ENCODE measurements at regions of chr1 and their contacts with region 1.

Region 1: DNA sequence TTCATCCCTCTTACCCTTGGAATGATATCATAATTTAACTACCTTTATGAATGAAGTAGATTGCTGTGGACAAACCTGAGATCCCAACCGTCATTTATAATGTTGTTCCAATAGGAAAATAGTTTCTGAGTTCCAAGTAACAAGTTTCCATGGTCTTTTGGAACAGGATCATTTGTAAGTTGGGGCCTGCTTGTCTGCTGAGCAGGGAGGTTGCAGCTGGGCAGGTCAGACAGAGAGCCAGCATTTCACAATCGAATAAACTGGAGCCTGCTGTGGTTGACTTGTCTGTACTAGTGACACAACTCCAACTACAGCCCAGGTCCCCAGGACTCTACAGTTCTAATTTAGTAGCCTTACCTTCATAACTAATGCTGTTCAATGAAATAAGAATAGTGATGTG is 18.6 kb upstream of the RALGPS2 start:
- DNase-seq: no peak
- ATAC-seq: no peak
- H3K4me3 ChIP-seq: no peak overlapping the region
- H3K27ac ChIP-seq: no peak overlapping the region
- H3K4me1 ChIP-seq: no peaks in the 10 kb centered on the region
- H3K27me3 ChIP-seq: no peaks in the 10 kb centered on the region
- CTCF ChIP-seq: no peak
- EP300 ChIP-seq: no peak
- POLR2A ChIP-seq: no peak
- RAD21 ChIP-seq: no peak

Region 2: DNA sequence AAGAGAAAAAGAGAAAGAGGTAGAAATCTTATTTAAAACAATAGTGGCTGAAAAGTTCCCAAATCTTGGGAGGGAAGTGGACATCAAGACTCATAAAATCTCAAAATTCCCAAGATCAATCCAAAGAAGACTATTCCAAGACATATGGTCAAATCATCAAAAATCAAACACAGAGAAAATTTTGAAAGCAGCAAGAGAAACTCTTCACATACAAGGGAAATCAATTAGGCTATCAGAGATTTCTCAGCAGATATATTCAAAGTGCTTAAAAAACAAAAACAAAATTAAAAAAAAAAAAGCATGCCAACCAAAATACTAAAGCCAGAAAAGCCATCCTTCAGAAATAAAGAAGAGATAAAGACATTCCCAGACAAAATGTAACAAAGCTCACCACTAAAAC is 34.0 kb before region 1 on chr1:
- CTCF ChIA-PET with region 1: no interaction called
- POLR2A ChIA-PET with region 1: no interaction called
- RAD21 ChIA-PET with region 1: no interaction called
- SMC1A ChIA-PET with region 1: no interaction called
- in situ Hi-C with region 1: no loop called
- intact Hi-C with region 1: no loop called
- DNase-seq: no peak
- ATAC-seq: no peak
- H3K4me3 ChIP-seq: no peak overlapping the region
- H3K27ac ChIP-seq: no peak overlapping the region
- H3K4me1 ChIP-seq: no peaks in the 10 kb centered on the region
- H3K27me3 ChIP-seq: no peaks in the 10 kb centered on the region
- CTCF ChIP-seq: no peak
- EP300 ChIP-seq: no peak
- POLR2A ChIP-seq: no peak
- RAD21 ChIP-seq: no peak

Region 3: GRCh38 chr1:178689769-178690168 is 16.7 kb before region 1 on chr1:
- CTCF ChIA-PET with region 1: no interaction called
- POLR2A ChIA-PET with region 1: no interaction called
- RAD21 ChIA-PET with region 1: no interaction called
- SMC1A ChIA-PET with region 1: no interaction called
- in situ Hi-C with region 1: no loop called
- intact Hi-C with region 1: loop called (anchors 1 kb)
- DNase-seq: no peak
- ATAC-seq: no peak
- H3K4me3 ChIP-seq: no peak overlapping the region
- H3K27ac ChIP-seq: no peak overlapping the region
- H3K4me1 ChIP-seq: peaks cover 4% of the 10 kb centered on the region
- H3K27me3 ChIP-seq: no peaks in the 10 kb centered on the region
- CTCF ChIP-seq: no peak
- EP300 ChIP-seq: no peak
- POLR2A ChIP-seq: no peak
- RAD21 ChIP-seq: no peak